B cell (primary cell): ENCODE measurements at regions of chr14 and their contacts with region 1.

Region 1: GRCh38 chr14:71403656-71404055 is 496.4 kb downstream of the PCNX1 start:
- DNase-seq: peak; percentile 84
- ATAC-seq: peak; percentile 43
- H3K4me3 ChIP-seq: no peak overlapping the region
- H3K4me3 Mint-ChIP-seq: peak overlapping the region; percentile 47
- H3K27ac ChIP-seq: peak overlapping the region; percentile 15 to 64
- H3K27ac Mint-ChIP-seq: peak overlapping the region; percentile 83
- H3K4me1 ChIP-seq: peaks cover 43 to 55% of the 10 kb centered on the region in 2 donors
- H3K4me1 Mint-ChIP-seq: peaks cover 53% of the 10 kb centered on the region
- H3K27me3 ChIP-seq: no peaks in the 10 kb centered on the region
- H3K27me3 Mint-ChIP-seq: no peaks in the 10 kb centered on the region
- CTCF ChIP-seq: peak; percentile 70

Region 2: GRCh38 chr14:70988452-70988851 is 415.2 kb before region 1 on chr14:
- CTCF ChIA-PET with region 1: no interaction called
- POLR2A ChIA-PET with region 1: no interaction called
- intact Hi-C with region 1: no loop called
- DNase-seq: no peak
- ATAC-seq: no peak
- H3K4me3 ChIP-seq: no peak overlapping the region
- H3K4me3 Mint-ChIP-seq: no peak overlapping the region
- H3K27ac ChIP-seq: no peak overlapping the region
- H3K27ac Mint-ChIP-seq: no peak overlapping the region
- H3K4me1 ChIP-seq: no peaks in the 10 kb centered on the region
- H3K4me1 Mint-ChIP-seq: peaks cover 2% of the 10 kb centered on the region
- H3K27me3 ChIP-seq: no peaks in the 10 kb centered on the region
- H3K27me3 Mint-ChIP-seq: no peaks in the 10 kb centered on the region
- CTCF ChIP-seq: no peak

Region 3: DNA sequence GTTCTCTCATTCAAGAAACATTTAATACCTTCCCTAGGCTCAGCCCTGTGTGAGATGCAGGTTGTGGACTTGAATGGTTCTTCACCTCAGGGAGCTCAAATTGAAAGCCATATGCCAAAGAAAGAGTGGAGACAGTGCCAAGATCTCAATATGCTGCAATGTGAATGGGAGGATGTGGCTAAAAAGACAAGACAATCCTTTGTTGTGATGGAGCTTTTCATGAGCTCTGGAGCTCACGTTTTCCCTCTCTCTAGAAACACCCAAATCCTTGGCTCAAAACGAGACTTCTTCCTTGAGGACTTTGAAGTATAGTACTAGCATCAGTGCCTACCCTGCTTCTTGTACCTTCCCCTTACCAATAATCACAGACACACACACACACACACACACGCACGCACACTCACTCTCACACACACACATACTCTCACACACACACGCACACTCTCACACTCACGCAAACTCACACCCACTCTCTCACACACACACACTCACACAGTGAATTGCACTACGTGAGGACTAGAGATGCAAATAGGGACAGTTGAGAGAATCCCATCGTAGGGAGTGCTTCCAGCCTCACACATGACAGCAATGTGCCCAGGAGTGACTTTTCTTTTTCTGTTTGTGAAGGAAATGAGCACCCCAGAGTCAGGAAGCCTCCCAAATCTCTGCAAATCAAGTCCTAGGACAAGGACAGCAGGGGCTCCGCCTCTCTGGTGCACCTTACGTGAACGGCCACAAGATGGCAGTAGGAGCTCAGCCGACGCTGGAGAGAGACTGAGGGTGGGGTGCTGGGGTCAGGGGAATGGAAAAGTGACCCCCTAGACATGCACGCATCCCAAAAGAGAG is 265.0 kb before region 1 on chr14:
- CTCF ChIA-PET with region 1: interaction called, 42 read pairs
- POLR2A ChIA-PET with region 1: no interaction called
- intact Hi-C with region 1: loop called (anchors 1 kb)
- DNase-seq: peak; percentile 77
- ATAC-seq: peak; percentile 72
- H3K4me3 ChIP-seq: no peak overlapping the region
- H3K4me3 Mint-ChIP-seq: no peak overlapping the region
- H3K27ac ChIP-seq: no peak overlapping the region
- H3K27ac Mint-ChIP-seq: no peak overlapping the region
- H3K4me1 ChIP-seq: peaks cover 15 to 23% of the 10 kb centered on the region in 2 donors
- H3K4me1 Mint-ChIP-seq: peaks cover 27% of the 10 kb centered on the region
- H3K27me3 ChIP-seq: no peaks in the 10 kb centered on the region
- H3K27me3 Mint-ChIP-seq: no peaks in the 10 kb centered on the region
- CTCF ChIP-seq: peak; percentile 97

Region 4: DNA sequence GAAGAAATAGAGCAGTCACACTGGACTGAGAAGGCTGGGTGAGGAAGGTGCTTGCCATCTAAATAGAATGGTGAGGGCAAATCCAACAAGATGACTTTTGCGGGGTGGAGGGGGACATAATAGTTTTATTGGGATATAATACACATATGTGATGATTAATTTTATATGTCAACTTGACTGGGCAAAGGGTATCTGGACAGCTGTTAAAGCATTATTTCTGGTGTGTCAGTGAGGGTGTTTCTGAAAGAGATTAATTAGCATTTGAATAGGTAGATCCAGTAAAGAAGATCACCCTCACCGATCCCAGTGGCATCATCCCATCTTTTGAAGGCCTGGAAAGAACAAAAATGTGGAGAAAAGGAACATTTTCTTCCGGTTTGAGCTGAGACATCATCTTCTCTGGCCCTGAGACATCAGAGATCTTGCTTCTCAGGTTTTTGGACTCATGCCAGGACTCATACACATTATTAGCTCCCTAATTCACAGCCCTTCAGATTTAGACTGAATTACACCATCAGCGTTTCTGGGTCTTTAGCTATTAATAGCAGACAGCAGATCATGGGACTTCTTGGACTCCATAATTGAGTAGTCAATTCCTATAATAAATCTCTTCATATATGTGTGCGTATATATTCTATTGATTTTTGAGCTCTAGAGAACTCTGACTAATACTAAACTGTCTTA is 212.8 kb before region 1 on chr14:
- CTCF ChIA-PET with region 1: no interaction called
- POLR2A ChIA-PET with region 1: no interaction called
- intact Hi-C with region 1: no loop called
- DNase-seq: no peak
- ATAC-seq: no peak
- H3K4me3 ChIP-seq: no peak overlapping the region
- H3K4me3 Mint-ChIP-seq: no peak overlapping the region
- H3K27ac ChIP-seq: no peak overlapping the region
- H3K27ac Mint-ChIP-seq: no peak overlapping the region
- H3K4me1 ChIP-seq: no peaks in the 10 kb centered on the region
- H3K4me1 Mint-ChIP-seq: no peaks in the 10 kb centered on the region
- H3K27me3 ChIP-seq: peaks cover 0 to 15% (median 2%) of the 10 kb centered on the region in 4 experiments
- H3K27me3 Mint-ChIP-seq: peaks cover 27% of the 10 kb centered on the region
- CTCF ChIP-seq: no peak

Region 5: DNA sequence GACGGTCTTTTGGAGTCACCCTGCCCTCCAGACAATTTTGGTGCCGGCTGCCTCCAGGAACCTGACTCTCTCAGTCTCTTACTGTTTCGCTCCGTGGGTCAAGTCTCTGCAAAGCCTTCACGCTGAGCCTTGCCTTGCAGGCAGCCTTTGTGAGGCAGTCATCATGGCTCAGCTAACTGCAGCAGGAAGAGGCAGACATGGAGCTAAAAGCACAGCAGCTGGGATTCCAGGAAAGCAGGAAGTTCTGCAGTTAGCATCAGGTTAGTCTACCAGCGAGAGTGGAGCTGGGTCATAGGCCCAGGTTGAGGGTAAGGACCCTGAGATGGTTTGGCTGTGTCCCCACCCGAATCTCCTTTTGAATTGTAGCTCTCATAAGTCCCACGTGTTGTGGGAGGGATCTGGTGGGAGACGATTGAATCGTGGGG is 191.0 kb before region 1 on chr14:
- CTCF ChIA-PET with region 1: no interaction called
- POLR2A ChIA-PET with region 1: no interaction called
- intact Hi-C with region 1: no loop called
- DNase-seq: no peak
- ATAC-seq: no peak
- H3K4me3 ChIP-seq: no peak overlapping the region
- H3K4me3 Mint-ChIP-seq: no peak overlapping the region
- H3K27ac ChIP-seq: no peak overlapping the region
- H3K27ac Mint-ChIP-seq: no peak overlapping the region
- H3K4me1 ChIP-seq: no peaks in the 10 kb centered on the region
- H3K4me1 Mint-ChIP-seq: no peaks in the 10 kb centered on the region
- H3K27me3 ChIP-seq: no peaks in the 10 kb centered on the region
- H3K27me3 Mint-ChIP-seq: peaks cover 7% of the 10 kb centered on the region
- CTCF ChIP-seq: no peak

Region 6: DNA sequence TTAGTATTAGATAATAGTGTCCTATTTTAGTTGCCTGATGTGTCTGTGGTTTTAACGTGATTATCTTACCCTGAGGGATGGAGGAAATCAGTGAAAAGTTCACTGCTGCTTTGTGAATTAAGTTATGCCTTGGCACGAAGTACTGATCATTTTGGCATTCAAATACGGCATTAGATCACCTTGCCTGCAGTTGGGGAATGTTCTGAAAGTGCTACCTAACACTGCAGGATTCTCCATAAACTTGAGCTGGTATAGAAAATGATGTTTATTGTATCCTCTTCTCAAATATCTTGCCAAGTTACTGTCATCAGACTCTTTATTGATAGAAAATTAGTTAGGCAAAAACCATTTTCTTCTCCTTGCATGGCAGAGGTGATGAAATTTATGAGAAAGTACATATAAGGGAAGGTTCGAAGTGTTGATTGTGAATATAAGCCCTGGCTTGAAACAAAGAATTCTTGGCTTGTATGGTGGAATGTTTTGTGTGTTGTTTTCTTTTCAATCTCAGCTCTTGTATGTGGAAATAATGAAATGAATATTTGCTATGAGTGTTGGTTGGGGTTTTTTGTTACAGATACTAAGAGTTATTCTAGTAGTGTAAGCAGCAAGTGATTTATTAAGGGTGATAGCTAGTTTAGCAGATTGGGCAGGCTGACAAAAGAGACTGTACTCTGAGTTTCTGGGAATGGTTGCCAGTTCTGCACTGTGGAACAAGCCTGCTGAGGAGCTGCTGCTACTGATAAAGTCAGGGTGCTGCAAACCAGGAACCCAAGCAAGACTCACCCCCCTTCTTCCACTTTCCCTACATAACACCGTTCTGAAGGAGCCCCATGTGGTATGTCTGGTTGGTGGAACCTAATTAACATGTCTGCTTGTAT is 48.1 kb before region 1 on chr14:
- CTCF ChIA-PET with region 1: interaction called, 16 read pairs
- POLR2A ChIA-PET with region 1: interaction called, 8 read pairs
- intact Hi-C with region 1: loop called (anchors 1 kb)
- DNase-seq: peak; percentile 86
- ATAC-seq: peak; percentile 47
- H3K4me3 ChIP-seq: peak overlapping the region in 1 of 5 experiments; percentile 35
- H3K4me3 Mint-ChIP-seq: peak overlapping the region; percentile 55
- H3K27ac ChIP-seq: peak overlapping the region; percentile 89 to 95
- H3K27ac Mint-ChIP-seq: peak overlapping the region; percentile 76
- H3K4me1 ChIP-seq: peaks cover 72 to 75% of the 10 kb centered on the region in 2 donors
- H3K4me1 Mint-ChIP-seq: peaks cover 80% of the 10 kb centered on the region
- H3K27me3 ChIP-seq: no peaks in the 10 kb centered on the region
- H3K27me3 Mint-ChIP-seq: no peaks in the 10 kb centered on the region
- CTCF ChIP-seq: no peak

Region 7: GRCh38 chr14:71415404-71415690 is 11.7 kb after region 1 on chr14:
- CTCF ChIA-PET with region 1: interaction called, 25 read pairs
- POLR2A ChIA-PET with region 1: interaction called, 3 read pairs
- intact Hi-C with region 1: no loop called
- DNase-seq: no peak
- ATAC-seq: no peak
- H3K4me3 ChIP-seq: no peak overlapping the region
- H3K4me3 Mint-ChIP-seq: no peak overlapping the region
- H3K27ac ChIP-seq: no peak overlapping the region
- H3K27ac Mint-ChIP-seq: no peak overlapping the region
- H3K4me1 ChIP-seq: no peaks in the 10 kb centered on the region
- H3K4me1 Mint-ChIP-seq: peaks cover 35% of the 10 kb centered on the region
- H3K27me3 ChIP-seq: no peaks in the 10 kb centered on the region
- H3K27me3 Mint-ChIP-seq: no peaks in the 10 kb centered on the region
- CTCF ChIP-seq: no peak

Region 8: DNA sequence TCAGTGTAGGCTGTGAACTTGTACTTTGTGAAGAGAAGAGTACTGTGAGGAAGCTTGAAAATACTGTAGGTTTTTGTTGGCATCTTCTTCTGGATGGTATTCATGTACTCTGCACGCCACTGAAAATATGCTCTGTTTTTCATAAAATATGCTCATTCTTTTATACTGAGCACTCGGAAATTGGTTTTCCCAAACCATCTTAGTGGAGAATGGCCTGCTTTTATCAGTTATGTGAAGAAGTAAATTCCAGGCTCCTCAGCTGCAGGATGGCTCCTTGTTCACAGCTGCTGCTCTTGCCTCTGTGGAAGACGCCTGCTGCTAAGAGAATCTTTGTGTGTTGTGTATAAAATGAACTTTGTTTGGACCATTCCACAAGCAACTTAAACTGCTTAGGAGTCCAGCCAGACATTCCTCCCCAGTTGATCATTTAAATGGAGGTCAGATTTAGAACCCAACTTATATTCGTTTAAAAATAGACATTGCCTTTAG is 85.1 kb after region 1 on chr14:
- CTCF ChIA-PET with region 1: no interaction called
- POLR2A ChIA-PET with region 1: no interaction called
- intact Hi-C with region 1: no loop called
- DNase-seq: no peak
- ATAC-seq: no peak
- H3K4me3 ChIP-seq: no peak overlapping the region
- H3K4me3 Mint-ChIP-seq: no peak overlapping the region
- H3K27ac ChIP-seq: no peak overlapping the region
- H3K27ac Mint-ChIP-seq: no peak overlapping the region
- H3K4me1 ChIP-seq: peaks cover 0 to 8% of the 10 kb centered on the region in 2 donors
- H3K4me1 Mint-ChIP-seq: peaks cover 22% of the 10 kb centered on the region
- H3K27me3 ChIP-seq: no peaks in the 10 kb centered on the region
- H3K27me3 Mint-ChIP-seq: no peaks in the 10 kb centered on the region
- CTCF ChIP-seq: no peak